Head of caudate nucleus (tissue), 42 donors: ENCODE measurements at regions of chr16 and their contacts with region 1.

Region 1: DNA sequence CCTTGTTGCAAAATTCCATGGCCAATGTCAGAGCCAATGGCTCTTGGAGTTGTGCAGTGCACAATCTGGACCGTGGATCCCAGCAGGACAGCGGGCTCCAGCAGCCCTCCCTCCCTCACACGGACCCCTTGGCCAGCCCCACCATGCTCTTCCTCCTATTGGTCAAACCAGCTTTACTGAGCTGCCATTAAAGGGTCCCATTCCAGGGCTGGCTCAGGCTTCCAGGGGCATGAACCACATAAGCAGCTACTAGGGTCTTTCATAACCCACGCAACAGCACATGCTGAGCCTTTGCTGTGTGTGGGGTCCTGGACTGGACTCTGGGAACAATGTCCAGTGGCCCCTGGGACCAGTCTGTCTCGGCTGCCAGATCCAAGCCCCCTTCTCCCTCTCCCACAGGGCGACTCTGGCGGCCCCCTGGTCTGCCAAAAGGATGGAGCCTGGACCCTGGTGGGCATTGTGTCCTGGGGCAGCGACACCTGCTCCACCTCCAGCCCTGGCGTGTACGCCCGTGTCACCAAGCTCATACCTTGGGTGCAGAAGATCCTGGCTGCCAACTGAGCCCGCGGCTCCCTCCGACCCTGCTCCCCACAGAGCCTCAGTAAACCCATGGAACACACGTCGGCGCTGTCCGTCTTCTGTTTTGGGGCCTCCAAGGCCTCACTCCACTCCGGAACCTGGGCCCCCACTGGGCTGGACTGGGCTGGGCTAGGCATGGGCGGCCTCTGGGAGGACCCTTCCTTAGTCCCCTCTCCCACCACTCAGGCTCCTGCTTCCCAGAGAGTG is 5.7 kb downstream of the CTRB1 start:
- DNase-seq: no peak

Region 2: GRCh38 chr16:75206749-75207451 is 17.6 kb before region 1 on chr16 and contains the start of gene CTRB2:
- intact Hi-C with region 1: loop called (anchors 2 kb)
- DNase-seq: no peak